ENCODE measurements at regions of chr15 and their contacts with region 1.

Region 1: DNA sequence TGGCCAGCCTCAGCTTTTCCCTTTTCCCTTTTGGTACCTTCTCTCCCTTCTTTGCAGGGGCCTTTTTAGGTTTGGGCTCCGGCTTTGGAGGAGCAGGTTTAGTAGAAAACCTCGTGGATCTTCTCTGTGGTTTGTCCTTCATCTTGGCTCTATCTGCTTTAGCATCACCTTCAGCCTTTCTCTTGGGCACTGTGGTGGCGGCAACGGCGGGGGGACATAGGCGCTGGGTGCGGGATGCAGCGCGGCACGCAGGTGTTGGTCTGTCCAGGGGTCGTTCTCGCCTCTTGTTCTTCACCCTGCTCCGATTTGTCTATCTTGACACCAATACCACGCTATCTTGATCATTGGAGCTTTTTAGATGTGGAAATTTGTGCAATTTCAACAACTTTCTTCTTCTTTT is 64.5 kb upstream of the SMAD3 start:
- DNase-seq: no peak
- H3K4me3 ChIP-seq: no peak overlapping the region
- H3K27ac ChIP-seq: no peak overlapping the region
- H3K4me1 ChIP-seq: no peaks in the 10 kb centered on the region
- CTCF ChIP-seq: no peak

Region 2: DNA sequence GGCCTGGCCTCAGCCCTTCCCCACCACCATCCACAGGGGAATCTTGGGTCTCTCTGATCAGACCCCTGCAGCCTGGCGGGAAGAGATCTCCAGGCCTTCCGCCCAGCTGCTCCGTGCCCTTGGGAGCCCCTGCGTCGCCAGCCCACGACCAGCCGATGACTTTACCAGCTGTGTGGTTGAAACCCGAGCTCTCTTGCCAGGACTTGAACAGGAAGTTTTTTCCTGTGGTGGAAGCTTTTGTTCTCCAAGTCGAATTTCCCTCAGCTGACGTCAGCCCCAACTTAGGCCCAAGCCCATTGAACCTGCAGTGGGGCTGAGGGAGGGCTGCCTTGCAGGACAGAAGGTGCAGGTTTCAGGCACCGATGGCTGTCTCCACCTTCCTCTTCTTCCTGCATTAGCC is 12.8 kb after region 1 on chr15:
- CTCF ChIA-PET with region 1: no interaction called
- POLR2A ChIA-PET with region 1: no interaction called
- intact Hi-C with region 1: loop called (anchors 1 kb)
- DNase-seq: no peak
- H3K4me3 ChIP-seq: no peak overlapping the region
- H3K27ac ChIP-seq: no peak overlapping the region
- H3K4me1 ChIP-seq: no peaks in the 10 kb centered on the region
- CTCF ChIP-seq: no peak